ENCODE measurements at regions of chr1 and their contacts with region 1.

Region 1: GRCh38 chr1:72341661-72342060 is 59.3 kb upstream of the NEGR1 start:
- DNase-seq: no peak
- ATAC-seq: no peak
- H3K4me3 Mint-ChIP-seq: no peak overlapping the region
- H3K27ac Mint-ChIP-seq: no peak overlapping the region
- H3K4me1 Mint-ChIP-seq: no peaks in the 10 kb centered on the region
- H3K27me3 Mint-ChIP-seq: no peaks in the 10 kb centered on the region
- CTCF ChIP-seq: no peak

Region 2: DNA sequence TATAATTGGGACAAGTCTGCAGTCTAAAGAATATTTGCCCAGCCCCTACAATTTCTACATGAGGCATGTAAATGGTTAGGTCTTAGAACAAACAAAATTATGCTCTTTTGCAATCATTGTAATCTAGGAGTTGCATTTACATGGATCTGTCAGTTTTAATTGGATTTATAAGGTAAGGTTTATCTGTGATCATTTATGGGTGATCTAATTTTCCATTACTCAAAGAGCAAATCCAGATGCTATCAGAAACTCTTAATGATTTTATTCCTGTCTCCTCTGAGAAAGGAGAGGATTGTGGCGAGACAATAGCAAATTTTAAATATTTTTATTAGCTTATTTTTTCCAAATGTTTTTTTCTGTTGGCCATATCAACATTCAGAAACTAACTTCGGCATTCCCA is 45.2 kb before region 1 on chr1:
- CTCF ChIA-PET with region 1: no interaction called
- POLR2A ChIA-PET with region 1: no interaction called
- intact Hi-C with region 1: loop called (anchors 1 kb)
- DNase-seq: no peak
- ATAC-seq: no peak
- H3K4me3 Mint-ChIP-seq: no peak overlapping the region
- H3K27ac Mint-ChIP-seq: no peak overlapping the region
- H3K4me1 Mint-ChIP-seq: no peaks in the 10 kb centered on the region
- H3K27me3 Mint-ChIP-seq: peaks cover 3% of the 10 kb centered on the region
- CTCF ChIP-seq: no peak